ENCODE measurements at regions of chr1 and their contacts with region 1.

Region 1: DNA sequence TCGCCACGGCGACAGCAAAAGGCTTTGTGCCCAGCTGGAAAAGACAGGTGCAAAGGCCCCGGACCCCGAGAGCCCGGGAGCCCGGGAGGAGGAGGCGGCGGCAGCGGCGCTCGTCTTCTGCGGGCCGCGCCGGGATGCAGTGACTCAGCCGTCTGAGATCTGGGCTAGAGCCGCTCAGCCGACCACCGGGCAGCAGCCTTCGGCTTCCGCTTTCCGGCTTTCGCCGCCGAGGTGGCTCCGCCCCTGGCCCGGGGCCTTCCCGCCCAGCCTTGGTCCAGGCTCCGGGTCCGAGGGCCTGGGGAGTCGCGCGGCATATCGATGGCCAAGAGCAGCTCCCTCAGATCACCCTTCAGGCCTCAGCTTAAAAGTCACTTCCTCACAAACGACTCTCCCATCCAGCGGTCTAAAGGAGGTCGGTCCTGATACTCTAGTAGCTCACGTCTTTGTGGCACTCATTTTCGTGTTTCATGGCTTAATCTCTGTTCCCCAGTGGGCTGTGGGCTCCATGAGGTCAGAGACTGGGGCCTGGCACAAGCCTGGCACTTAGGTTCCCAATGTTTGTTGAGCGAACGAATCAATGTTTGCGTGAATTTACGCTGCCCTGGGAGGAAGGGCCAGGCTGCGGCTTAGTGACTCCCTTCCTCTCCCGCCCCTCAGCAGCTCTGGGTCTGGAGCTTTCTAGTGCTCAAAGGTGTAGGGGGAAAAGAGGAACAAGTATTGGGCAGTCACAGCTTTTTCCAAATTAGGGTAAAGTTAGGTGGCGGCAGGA is at the start of gene PHTF1:
- DNase-seq: peak; percentile 38 to 72 (median 53)
- H3K4me3 ChIP-seq: peak within 1 kb of the TSS; percentile 76
- H3K4me3 Mint-ChIP-seq: peak within 1 kb of the TSS; percentile 91 to 96 (median 93)
- H3K27ac ChIP-seq: peak within 1 kb of the TSS; percentile 90
- H3K27ac Mint-ChIP-seq: peak within 1 kb of the TSS; percentile 93 to 97 (median 96)
- H3K4me1 ChIP-seq: peaks cover 10% of the 10 kb centered on the region
- H3K4me1 Mint-ChIP-seq: peaks cover 29 to 42% (median 42%) of the 10 kb centered on the region in 3 donors
- H3K27me3 ChIP-seq: no peaks in the 10 kb centered on the region
- H3K27me3 Mint-ChIP-seq: no peaks in the 10 kb centered on the region
- total RNA-seq, gene PHTF1: 17.5 to 17.8 TPM

Region 2: GRCh38 chr1:113783254-113784099 is 24.0 kb after region 1 on chr1:
- CTCF ChIA-PET with region 1: interaction called, 6 read pairs
- POLR2A ChIA-PET with region 1: interaction called, 11 read pairs
- DNase-seq: peak; percentile 25 to 71 (median 69)
- H3K4me3 ChIP-seq: peak overlapping the region; percentile 11
- H3K4me3 Mint-ChIP-seq: peak overlapping the region; percentile 13 to 74 (median 64)
- H3K27ac ChIP-seq: peak overlapping the region; percentile 52
- H3K27ac Mint-ChIP-seq: no peak overlapping the region
- H3K4me1 ChIP-seq: peaks cover 84% of the 10 kb centered on the region
- H3K4me1 Mint-ChIP-seq: peaks cover 33 to 38% (median 35%) of the 10 kb centered on the region in 3 donors
- H3K27me3 ChIP-seq: no peaks in the 10 kb centered on the region
- H3K27me3 Mint-ChIP-seq: no peaks in the 10 kb centered on the region

Region 3: GRCh38 chr1:113811888-113812660 is 52.6 kb after region 1 on chr1 and contains the start of gene RSBN1:
- CTCF ChIA-PET with region 1: interaction called, 14 read pairs
- POLR2A ChIA-PET with region 1: interaction called, 25 read pairs
- DNase-seq: peak; percentile 96 to 99 (median 98)
- H3K4me3 ChIP-seq: peak within 1 kb of the TSS; percentile 72
- H3K4me3 Mint-ChIP-seq: peak within 1 kb of the TSS; percentile 94 to 100 (median 97)
- H3K27ac ChIP-seq: peak within 1 kb of the TSS; percentile 89
- H3K27ac Mint-ChIP-seq: peak within 1 kb of the TSS; percentile 94 to 98 (median 96)
- H3K4me1 ChIP-seq: peaks cover 34% of the 10 kb centered on the region
- H3K4me1 Mint-ChIP-seq: peaks cover 33 to 52% (median 49%) of the 10 kb centered on the region in 3 donors
- H3K27me3 ChIP-seq: no peaks in the 10 kb centered on the region
- H3K27me3 Mint-ChIP-seq: no peaks in the 10 kb centered on the region
- total RNA-seq, gene RSBN1: 18.5 to 19.2 TPM

Region 4: DNA sequence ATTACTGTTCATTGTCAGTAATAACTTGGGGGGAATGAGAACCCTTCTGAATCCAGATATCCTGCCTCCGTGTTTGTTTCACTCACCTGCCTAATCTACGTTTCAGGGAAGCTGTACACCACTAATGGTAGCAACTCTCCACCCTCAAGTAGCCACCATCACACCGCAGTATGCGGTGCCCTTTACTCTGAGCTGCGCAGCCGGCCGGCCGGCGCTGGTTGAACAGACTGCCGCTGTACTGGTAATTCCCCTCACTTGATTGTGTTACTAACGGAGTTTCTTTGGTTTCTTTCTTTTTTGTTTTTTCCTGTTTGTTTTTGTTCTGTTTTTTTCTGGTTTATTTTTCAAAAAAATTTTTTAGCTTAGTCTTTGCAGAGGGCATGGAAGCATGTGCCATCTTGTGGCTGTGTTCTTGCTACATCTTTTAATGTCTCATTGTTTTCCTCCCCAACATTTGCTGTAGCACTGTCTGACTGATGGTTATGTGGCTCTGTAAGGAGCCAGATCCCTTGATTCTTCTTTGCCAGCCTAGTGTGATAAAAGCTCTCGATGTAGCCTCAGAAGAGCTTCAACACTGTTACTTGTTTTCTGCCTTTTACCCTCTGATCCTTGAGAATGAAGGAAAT is 203.9 kb after region 1 on chr1:
- CTCF ChIA-PET with region 1: no interaction called
- POLR2A ChIA-PET with region 1: interaction called, 11 read pairs
- DNase-seq: peak in 1 of 5 donors; percentile 31
- H3K4me3 ChIP-seq: no peak overlapping the region
- H3K4me3 Mint-ChIP-seq: no peak overlapping the region
- H3K27ac ChIP-seq: no peak overlapping the region
- H3K27ac Mint-ChIP-seq: peak overlapping the region in 5 of 8 donors; percentile 0 to 83 (median 36)
- H3K4me1 ChIP-seq: no peaks in the 10 kb centered on the region
- H3K4me1 Mint-ChIP-seq: peaks cover 16 to 31% (median 27%) of the 10 kb centered on the region in 3 donors
- H3K27me3 ChIP-seq: no peaks in the 10 kb centered on the region
- H3K27me3 Mint-ChIP-seq: no peaks in the 10 kb centered on the region